ENCODE measurements at regions of chr9 and their contacts with region 1.

Region 1: GRCh38 chr9:93119953-93120845 is 13.9 kb downstream of the NINJ1 start:
- DNase-seq: peak; percentile 89
- ATAC-seq: peak; percentile 78 to 91
- H3K4me3 ChIP-seq: no peak overlapping the region
- H3K27ac ChIP-seq: peak overlapping the region; percentile 85 to 95
- H3K4me1 ChIP-seq: peaks cover 30% of the 10 kb centered on the region
- CTCF ChIP-seq: no peak
- EP300 ChIP-seq: no peak
- POLR2A ChIP-seq: no peak
- RAD21 ChIP-seq: no peak; a peak in 1 of 5 replicates

Region 2: DNA sequence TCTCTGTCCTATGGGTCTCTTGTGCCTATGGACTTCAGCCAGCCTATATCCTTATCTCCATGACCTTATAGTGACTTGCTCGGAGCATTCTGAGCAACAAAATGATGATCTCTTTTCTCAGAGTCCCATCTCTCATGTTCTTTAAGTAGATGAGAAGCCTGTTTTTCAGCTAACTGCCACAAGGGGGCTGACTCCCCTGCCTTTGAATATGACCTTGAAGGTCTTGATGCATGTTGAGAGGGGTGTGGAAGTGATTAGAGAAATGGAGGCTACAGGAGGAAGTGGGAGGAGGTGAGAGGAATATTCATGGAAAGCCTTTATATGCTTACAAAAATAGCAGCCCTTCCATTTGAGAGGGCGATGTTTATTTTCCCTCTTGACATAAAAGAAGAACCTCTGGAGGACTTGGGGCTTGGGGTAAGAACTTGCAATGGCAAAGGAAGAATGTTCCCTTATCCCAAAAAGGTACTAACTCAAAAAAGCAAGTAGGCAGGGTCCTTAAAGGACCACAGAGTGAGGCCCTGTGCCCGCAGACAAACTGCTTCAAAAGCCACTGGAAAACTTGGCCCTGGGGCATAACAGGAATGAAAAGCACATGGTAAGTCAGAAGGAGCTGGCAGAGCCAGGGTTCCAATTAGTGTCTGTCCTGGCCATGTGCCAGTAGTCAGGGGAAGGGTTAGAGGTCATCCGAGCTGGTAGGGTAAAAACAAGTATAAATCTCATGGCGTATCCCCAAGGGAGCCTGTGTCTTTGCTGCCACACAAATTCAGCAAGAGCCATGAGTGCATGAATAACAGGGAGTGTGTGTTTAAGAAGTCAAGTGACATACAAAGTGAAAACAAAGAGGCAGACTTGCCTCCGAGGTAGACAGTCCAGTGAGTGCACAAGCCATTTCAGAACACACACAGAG is 133.8 kb before region 1 on chr9:
- CTCF ChIA-PET with region 1: no interaction called
- POLR2A ChIA-PET with region 1: no interaction called
- DNase-seq: peak in 1 of 2 experiments; percentile 39
- ATAC-seq: no peak
- H3K4me3 ChIP-seq: no peak overlapping the region
- H3K27ac ChIP-seq: no peak overlapping the region
- H3K4me1 ChIP-seq: no peaks in the 10 kb centered on the region
- CTCF ChIP-seq: no peak
- EP300 ChIP-seq: no peak
- POLR2A ChIP-seq: no peak
- RAD21 ChIP-seq: peak in 1 of 2 experiments; percentile 20; a peak in 2 of 5 replicates

Region 3: GRCh38 chr9:93095205-93096130 is 24.7 kb before region 1 on chr9:
- CTCF ChIA-PET with region 1: interaction called, 4 read pairs
- POLR2A ChIA-PET with region 1: interaction called, 12 read pairs
- DNase-seq: peak; percentile 91 to 98
- ATAC-seq: peak; percentile 55 to 89
- H3K4me3 ChIP-seq: peak overlapping the region; percentile 57
- H3K27ac ChIP-seq: peak overlapping the region; percentile 98 to 99
- H3K4me1 ChIP-seq: peaks cover 64% of the 10 kb centered on the region
- CTCF ChIP-seq: no peak
- EP300 ChIP-seq: no peak
- POLR2A ChIP-seq: peak; percentile 83
- RAD21 ChIP-seq: no peak

Region 4: DNA sequence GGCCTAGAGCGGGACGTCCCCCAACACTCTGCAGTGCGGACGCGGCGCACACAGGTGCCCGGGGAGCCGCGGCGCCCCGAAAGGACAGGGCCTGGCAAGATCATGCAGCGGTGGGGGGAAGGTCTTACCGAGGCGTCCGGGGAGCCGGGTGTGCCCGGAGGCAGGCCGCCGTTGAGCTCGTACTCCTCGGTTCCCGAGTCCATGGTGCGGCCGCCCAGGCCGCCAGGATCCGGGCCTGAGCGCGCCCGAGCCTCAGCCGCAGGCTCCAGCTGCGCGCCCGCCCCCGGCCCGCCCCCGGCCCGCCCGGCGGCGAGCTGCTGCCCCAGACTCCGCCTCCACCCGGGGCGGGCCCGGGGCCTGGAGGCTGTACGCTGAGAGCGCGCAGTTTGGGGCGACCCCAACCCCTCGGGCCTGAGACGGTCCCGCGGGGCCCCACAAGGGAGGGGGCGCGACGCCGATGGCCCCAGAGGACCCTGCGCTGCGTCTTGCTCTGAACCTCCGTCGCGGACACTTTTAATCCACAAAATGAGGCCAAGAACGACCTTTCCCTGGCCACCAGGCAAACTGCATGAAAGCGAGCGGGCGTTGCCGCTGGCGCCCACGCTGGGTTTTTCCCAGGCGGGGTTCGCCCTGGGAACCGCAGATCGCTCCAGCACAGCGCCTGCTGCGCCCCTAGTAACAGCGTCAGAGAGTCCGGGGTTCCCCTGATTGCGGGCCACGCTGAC is 14.0 kb after region 1 on chr9 and contains the start of gene NINJ1:
- CTCF ChIA-PET with region 1: interaction called, 42 read pairs
- POLR2A ChIA-PET with region 1: interaction called, 35 read pairs
- DNase-seq: peak; percentile 56 to 90
- ATAC-seq: peak; percentile 74 to 85
- H3K4me3 ChIP-seq: peak within 1 kb of the TSS; percentile 89
- H3K27ac ChIP-seq: peak within 1 kb of the TSS; percentile 91 to 96
- H3K4me1 ChIP-seq: peaks cover 46% of the 10 kb centered on the region
- CTCF ChIP-seq: no peak
- EP300 ChIP-seq: no peak
- POLR2A ChIP-seq: peak; percentile 73
- RAD21 ChIP-seq: no peak
- polyA plus RNA-seq, gene NINJ1: 27.0 and 37.9 TPM in 2 replicates

Measured in A549 (cell line).